ENCODE measurements at regions of chr1 and their contacts with region 1.

Region 1: GRCh38 chr1:224182866-224183590 is at the start of gene DEGS1:
- DNase-seq: peak; percentile 97
- H3K4me3 ChIP-seq: peak within 1 kb of the TSS; percentile 68 to 96 (median 88)
- H3K27ac ChIP-seq: peak within 1 kb of the TSS; percentile 96 to 99 (median 99)
- H3K4me1 ChIP-seq: peaks cover 9 to 66% (median 49%) of the 10 kb centered on the region in 6 donors
- H3K27me3 ChIP-seq: no peaks in the 10 kb centered on the region
- CTCF ChIP-seq: peak in 2 of 11 experiments; percentile 7 to 18
- POLR2A ChIP-seq: peak in 2 of 3 donors; percentile 65 to 94
- total RNA-seq, gene DEGS1: 48.8 to 102 (median 63.2) TPM

Region 2: DNA sequence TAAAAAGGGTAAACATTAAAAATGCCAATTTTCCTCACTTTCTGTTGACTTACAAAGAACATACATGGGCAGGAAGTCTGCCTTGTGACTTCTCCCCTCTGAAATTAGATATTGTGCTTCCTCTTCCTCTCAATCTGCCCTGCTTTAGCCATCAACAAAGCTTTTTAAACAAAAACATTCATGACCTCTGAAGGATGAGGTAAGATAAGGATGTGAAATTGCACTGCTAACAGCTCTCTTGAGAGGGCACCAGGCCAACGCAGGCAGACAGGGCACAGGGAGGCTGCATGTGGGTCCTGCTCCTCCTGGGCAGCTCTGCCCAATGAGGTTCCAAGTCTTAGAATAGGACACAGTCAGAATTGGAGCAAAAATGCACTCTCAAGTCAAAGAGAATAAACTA is 62.2 kb after region 1 on chr1:
- intact Hi-C with region 1: loop called (anchors 5 kb)
- DNase-seq: peak; percentile 92
- H3K4me3 ChIP-seq: no peak overlapping the region
- H3K27ac ChIP-seq: peak overlapping the region; percentile 71 to 92 (median 83)
- H3K4me1 ChIP-seq: peaks cover 8 to 31% (median 21%) of the 10 kb centered on the region in 6 donors
- H3K27me3 ChIP-seq: no peaks in the 10 kb centered on the region
- CTCF ChIP-seq: no peak
- POLR2A ChIP-seq: no peak

Region 3: DNA sequence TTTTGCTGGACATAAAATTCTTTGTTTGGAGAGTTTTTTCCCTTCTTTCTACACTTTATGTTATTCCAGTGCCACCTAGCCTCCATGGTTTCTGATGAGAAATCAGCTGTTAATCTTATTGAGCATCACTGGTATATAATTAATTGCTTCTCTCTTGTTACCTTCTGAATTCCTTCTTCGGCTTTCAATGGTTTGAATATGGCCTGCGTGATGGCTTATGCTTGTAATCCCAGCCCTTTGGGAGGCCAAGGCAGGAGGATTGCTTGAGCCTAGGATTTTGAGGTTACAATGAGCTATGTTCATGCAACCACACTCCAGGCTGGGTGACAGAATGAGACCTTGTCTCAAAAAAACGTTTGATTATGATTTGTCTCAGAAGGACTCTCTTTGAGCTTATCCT is 160.7 kb after region 1 on chr1:
- intact Hi-C with region 1: no loop called
- DNase-seq: no peak
- H3K4me3 ChIP-seq: no peak overlapping the region
- H3K27ac ChIP-seq: no peak overlapping the region
- H3K4me1 ChIP-seq: peaks cover 0 to 11% (median 6%) of the 10 kb centered on the region in 6 donors
- H3K27me3 ChIP-seq: peaks cover 0 to 11% (median 0%) of the 10 kb centered on the region in 7 donors
- CTCF ChIP-seq: no peak
- POLR2A ChIP-seq: no peak